H1 (cell line): ENCODE measurements at regions of chr22 and their contacts with region 1.

Region 1: DNA sequence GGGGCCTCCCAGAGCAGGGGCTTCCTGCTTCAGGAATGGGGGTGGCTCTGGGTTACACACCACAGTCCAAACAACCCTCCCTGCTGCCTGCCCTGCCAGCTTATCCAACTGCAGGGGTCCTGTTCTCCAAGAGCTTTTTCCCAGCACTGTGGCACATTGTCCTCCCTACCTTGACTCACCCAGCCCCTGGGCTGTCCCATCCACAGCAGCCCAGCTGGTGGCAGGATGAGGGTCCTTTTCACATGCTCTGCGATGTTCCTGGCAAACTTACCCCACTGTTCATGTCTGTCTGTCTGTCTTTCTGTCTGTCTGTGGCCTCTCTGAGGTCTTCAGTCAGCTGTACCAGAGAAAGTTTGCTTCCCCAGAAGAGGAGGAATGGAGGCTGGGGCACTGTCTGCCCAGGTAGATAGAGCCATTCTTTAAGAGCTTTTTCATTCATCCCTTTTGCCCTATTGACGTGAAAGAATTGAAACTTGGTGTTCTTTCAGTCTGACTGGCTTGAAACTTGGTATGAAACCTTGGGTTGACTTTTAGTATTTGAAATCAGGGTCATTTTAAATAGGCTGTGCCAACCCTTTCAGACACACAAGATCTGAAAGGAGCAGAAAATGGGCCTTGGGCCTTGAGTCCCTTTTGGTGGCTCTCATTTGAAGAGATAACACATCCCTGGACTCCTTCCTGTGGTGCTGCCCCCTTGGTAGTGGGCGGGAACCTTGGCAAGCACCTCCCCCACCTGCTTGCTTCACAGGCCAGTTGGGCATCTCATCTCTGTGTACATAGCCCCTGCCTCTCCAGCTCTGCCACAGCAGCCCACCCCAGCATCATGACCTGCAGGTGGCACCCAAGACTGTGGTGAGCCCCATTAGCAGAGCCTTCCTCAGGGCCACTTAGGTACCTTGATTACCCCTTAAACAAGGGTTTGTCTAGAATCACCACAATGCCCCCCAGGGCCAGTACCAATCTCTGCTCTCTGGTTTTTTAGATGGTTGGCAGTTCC is 74.6 kb upstream of the SUSD2 start:
- DNase-seq: peak in 1 of 2 experiments; percentile 49
- H3K4me3 ChIP-seq: no peak overlapping the region
- H3K27ac ChIP-seq: no peak overlapping the region
- H3K4me1 ChIP-seq: no peaks in the 10 kb centered on the region
- H3K27me3 ChIP-seq: no peaks in the 10 kb centered on the region
- CTCF ChIP-seq: peak; percentile 25 to 35 (median 28); a peak in 3 of 4 replicates
- EP300 ChIP-seq: no peak
- POLR2A ChIP-seq: no peak
- RAD21 ChIP-seq: peak; percentile 37 to 53; a peak in 3 of 4 replicates

Region 2: DNA sequence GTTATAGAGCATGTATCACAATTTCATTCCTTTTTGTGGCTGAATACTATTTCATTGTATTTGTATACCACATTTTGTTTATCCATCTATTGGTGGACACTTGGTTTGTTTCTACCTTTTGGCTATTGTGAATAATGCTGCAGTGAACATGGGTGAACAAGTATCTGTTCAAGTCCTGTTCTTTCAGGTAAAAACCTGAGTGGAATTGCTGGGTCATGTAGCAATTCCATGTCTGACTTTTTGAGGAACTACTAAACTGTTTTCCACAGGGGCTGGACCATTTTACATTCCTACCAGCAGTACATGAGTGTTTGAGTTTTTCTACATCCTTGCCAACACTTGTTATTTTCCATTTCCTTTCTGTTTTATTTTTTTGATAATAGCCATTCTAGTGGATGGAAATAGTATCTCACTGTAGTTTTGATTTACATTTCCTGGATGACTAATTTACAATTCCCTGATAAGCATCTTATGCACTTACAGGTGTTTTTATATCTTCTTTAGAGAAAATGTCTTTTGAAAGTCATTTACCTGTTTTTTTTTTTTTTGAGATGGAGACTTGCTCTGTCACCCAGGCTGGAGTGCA is 83.4 kb before region 1 on chr22:
- CTCF ChIA-PET with region 1: no interaction called
- POLR2A ChIA-PET with region 1: no interaction called
- DNase-seq: no peak
- H3K4me3 ChIP-seq: no peak overlapping the region
- H3K27ac ChIP-seq: no peak overlapping the region
- H3K4me1 ChIP-seq: no peaks in the 10 kb centered on the region; a peak in 1 of 7 replicates
- H3K27me3 ChIP-seq: no peaks in the 10 kb centered on the region
- CTCF ChIP-seq: no peak
- EP300 ChIP-seq: no peak
- POLR2A ChIP-seq: no peak
- RAD21 ChIP-seq: no peak

Region 3: DNA sequence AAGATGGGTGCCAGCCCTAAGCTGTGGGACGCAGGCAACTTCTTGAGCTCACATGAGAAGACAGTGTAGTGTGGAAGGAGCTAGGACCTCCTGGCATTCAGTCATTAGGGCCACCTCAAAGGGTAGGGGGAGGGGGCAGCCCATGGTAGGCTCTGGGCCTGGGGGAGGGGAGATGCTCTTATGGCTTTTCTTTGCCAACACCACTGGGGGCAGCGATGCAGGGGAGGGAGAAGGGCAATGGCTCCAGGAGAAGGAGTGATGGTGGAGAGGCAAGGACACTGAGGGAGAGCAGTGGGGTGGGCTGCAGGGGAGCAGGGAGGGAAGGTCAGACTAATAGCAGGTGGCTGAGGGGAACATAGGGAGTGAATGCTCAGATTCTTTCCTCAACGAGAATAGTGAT is 11.3 kb after region 1 on chr22:
- CTCF ChIA-PET with region 1: interaction called, 11 read pairs
- POLR2A ChIA-PET with region 1: interaction called, 4 read pairs
- DNase-seq: peak in 1 of 2 experiments; percentile 59
- H3K4me3 ChIP-seq: no peak overlapping the region
- H3K27ac ChIP-seq: no peak overlapping the region
- H3K4me1 ChIP-seq: peaks cover 3% of the 10 kb centered on the region in 4 experiments; a peak in 4 of 7 replicates
- H3K27me3 ChIP-seq: no peaks in the 10 kb centered on the region
- CTCF ChIP-seq: peak in 2 of 3 experiments; percentile 18 to 39; a peak in 2 of 4 replicates
- EP300 ChIP-seq: no peak
- POLR2A ChIP-seq: no peak
- RAD21 ChIP-seq: no peak

Region 4: GRCh38 chr22:24128021-24128420 is 21.3 kb after region 1 on chr22:
- CTCF ChIA-PET with region 1: interaction called, 32 read pairs
- POLR2A ChIA-PET with region 1: no interaction called
- DNase-seq: no peak
- H3K4me3 ChIP-seq: no peak overlapping the region
- H3K27ac ChIP-seq: no peak overlapping the region
- H3K4me1 ChIP-seq: no peaks in the 10 kb centered on the region
- H3K27me3 ChIP-seq: no peaks in the 10 kb centered on the region
- CTCF ChIP-seq: no peak
- EP300 ChIP-seq: no peak
- POLR2A ChIP-seq: no peak
- RAD21 ChIP-seq: no peak

Region 5: GRCh38 chr22:24146194-24146616 is 39.5 kb after region 1 on chr22:
- CTCF ChIA-PET with region 1: interaction called, 10 read pairs
- POLR2A ChIA-PET with region 1: no interaction called
- DNase-seq: peak in 1 of 2 experiments; percentile 65
- H3K4me3 ChIP-seq: no peak overlapping the region
- H3K27ac ChIP-seq: no peak overlapping the region
- H3K4me1 ChIP-seq: peaks cover 5 to 19% (median 11%) of the 10 kb centered on the region in 4 experiments
- H3K27me3 ChIP-seq: no peaks in the 10 kb centered on the region
- CTCF ChIP-seq: no peak
- EP300 ChIP-seq: no peak
- POLR2A ChIP-seq: no peak
- RAD21 ChIP-seq: no peak

Region 6: DNA sequence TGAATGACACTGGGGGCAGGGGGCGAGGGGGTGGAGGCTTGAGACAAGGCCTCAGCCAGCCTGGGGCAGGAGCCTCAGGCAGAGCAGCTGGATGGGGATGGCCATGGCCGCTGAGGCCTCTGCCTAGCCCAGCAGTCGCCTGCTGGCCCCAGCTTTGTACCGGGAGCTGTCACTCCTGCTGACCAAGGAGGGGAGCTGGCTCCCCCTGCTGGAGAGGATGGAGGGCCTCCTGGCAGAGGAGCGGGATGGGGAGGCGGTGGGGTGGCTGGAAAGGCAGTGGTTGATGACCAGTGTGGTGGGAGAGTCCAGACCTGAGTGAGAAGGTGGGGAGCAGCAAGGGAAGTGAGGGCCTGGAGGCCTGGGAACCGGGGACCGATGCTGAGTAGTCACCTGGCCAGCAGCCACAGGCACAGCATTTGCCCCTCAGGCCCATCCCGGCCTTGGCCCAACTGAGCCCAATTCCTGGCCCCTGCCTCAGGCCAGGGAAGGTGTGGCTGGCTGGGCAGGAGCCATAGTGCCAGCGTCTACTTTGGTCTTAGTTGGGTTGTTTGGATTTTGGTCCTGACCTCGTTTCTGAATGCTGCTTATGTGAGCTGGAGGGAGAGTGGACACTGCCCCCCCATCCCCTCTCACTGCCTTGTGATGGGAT is 68.6 kb after region 1 on chr22:
- CTCF ChIA-PET with region 1: interaction called, 14 read pairs
- POLR2A ChIA-PET with region 1: no interaction called
- DNase-seq: peak; percentile 46 to 94
- H3K4me3 ChIP-seq: no peak overlapping the region
- H3K27ac ChIP-seq: no peak overlapping the region
- H3K4me1 ChIP-seq: no peaks in the 10 kb centered on the region; a peak in 1 of 7 replicates
- H3K27me3 ChIP-seq: no peaks in the 10 kb centered on the region
- CTCF ChIP-seq: peak; percentile 94 to 97 (median 94)
- EP300 ChIP-seq: peak in 1 of 2 experiments; percentile 13; a peak in 1 of 3 replicates
- POLR2A ChIP-seq: no peak
- RAD21 ChIP-seq: peak; percentile 84 to 92